ENCODE measurements at regions of chr13 and their contacts with region 1.

Region 1: GRCh38 chr13:59677966-59678814 is 485.5 kb downstream of the DIAPH3 start:
- DNase-seq: peak; percentile 42
- ATAC-seq: peak; percentile 87
- H3K4me3 ChIP-seq: no peak overlapping the region
- H3K27ac ChIP-seq: no peak overlapping the region
- H3K4me1 ChIP-seq: no peaks in the 10 kb centered on the region
- H3K27me3 ChIP-seq: no peaks in the 10 kb centered on the region
- CTCF ChIP-seq: peak; percentile 76
- EP300 ChIP-seq: no peak
- POLR2A ChIP-seq: no peak
- RAD21 ChIP-seq: peak; percentile 49

Region 2: GRCh38 chr13:59391696-59392095 is 286.5 kb before region 1 on chr13:
- CTCF ChIA-PET with region 1: interaction called, 16 read pairs
- POLR2A ChIA-PET with region 1: no interaction called
- in situ Hi-C with region 1: loop called (anchors 5 kb)
- intact Hi-C with region 1: loop called (anchors 1 kb)
- DNase-seq: peak; percentile 39
- ATAC-seq: peak; percentile 87
- H3K4me3 ChIP-seq: no peak overlapping the region
- H3K27ac ChIP-seq: no peak overlapping the region
- H3K4me1 ChIP-seq: no peaks in the 10 kb centered on the region
- H3K27me3 ChIP-seq: no peaks in the 10 kb centered on the region
- CTCF ChIP-seq: peak; percentile 75
- EP300 ChIP-seq: no peak
- POLR2A ChIP-seq: no peak
- RAD21 ChIP-seq: no peak

Region 3: DNA sequence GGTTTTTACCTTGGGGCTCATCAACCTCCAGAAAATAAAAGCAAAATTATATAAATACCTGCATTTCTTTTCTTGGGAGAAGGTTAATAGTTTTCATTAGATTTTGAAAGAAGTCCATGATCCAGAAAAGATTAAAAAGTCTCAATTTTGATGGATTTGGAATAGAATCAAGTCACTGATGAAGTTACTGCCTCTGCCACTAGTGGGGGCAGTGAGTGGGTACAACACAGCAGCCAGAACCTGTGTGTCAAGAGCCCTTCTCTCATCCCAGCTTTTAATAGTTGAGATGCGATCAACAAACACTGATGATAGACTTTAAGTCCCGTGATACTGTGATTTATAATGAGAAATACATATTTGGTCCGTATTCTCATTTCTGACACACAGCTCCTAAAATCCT is 201.2 kb before region 1 on chr13:
- CTCF ChIA-PET with region 1: interaction called, 4 read pairs
- POLR2A ChIA-PET with region 1: no interaction called
- in situ Hi-C with region 1: no loop called
- intact Hi-C with region 1: loop called (anchors 1 kb)
- DNase-seq: peak; percentile 2
- ATAC-seq: peak; percentile 77
- H3K4me3 ChIP-seq: no peak overlapping the region
- H3K27ac ChIP-seq: no peak overlapping the region
- H3K4me1 ChIP-seq: no peaks in the 10 kb centered on the region
- H3K27me3 ChIP-seq: no peaks in the 10 kb centered on the region
- CTCF ChIP-seq: peak; percentile 35
- EP300 ChIP-seq: no peak
- POLR2A ChIP-seq: no peak
- RAD21 ChIP-seq: no peak

Region 4: DNA sequence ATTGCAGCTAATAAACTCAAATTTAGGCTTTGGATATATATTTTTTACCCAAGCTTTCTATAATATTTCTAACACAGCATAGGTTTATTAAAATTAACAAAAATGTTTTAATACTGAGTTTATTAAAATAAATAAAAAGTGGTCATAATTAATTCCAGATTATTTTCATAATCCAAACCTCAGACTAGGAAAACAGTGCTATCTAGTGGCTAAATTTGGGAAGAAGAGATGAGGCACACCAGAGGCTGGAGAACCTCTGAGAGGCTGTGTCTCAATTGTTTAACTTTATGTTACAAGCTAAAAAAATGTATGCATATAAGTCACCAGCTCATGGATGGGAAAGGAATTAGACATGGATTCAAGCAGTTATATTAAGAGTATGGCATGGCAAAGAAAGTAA is 93.1 kb after region 1 on chr13:
- CTCF ChIA-PET with region 1: interaction called, 15 read pairs
- POLR2A ChIA-PET with region 1: no interaction called
- in situ Hi-C with region 1: loop called (anchors 10 kb)
- intact Hi-C with region 1: loop called (anchors 1 kb)
- DNase-seq: peak; percentile 4
- ATAC-seq: no peak
- H3K4me3 ChIP-seq: no peak overlapping the region
- H3K27ac ChIP-seq: no peak overlapping the region
- H3K4me1 ChIP-seq: no peaks in the 10 kb centered on the region; the same call in 1 of the 2 replicates
- H3K27me3 ChIP-seq: no peaks in the 10 kb centered on the region
- CTCF ChIP-seq: peak; percentile 57
- EP300 ChIP-seq: no peak
- POLR2A ChIP-seq: no peak
- RAD21 ChIP-seq: no peak

Region 5: GRCh38 chr13:59906413-59907049 is 228.3 kb after region 1 on chr13:
- CTCF ChIA-PET with region 1: interaction called, 12 read pairs
- POLR2A ChIA-PET with region 1: no interaction called
- in situ Hi-C with region 1: loop called (anchors 10 kb)
- intact Hi-C with region 1: loop called (anchors 1 kb)
- DNase-seq: peak; percentile 1
- ATAC-seq: peak; percentile 47; the same call in 2 of the 3 replicates
- H3K4me3 ChIP-seq: no peak overlapping the region
- H3K27ac ChIP-seq: no peak overlapping the region
- H3K4me1 ChIP-seq: no peaks in the 10 kb centered on the region
- H3K27me3 ChIP-seq: no peaks in the 10 kb centered on the region
- CTCF ChIP-seq: peak; percentile 60
- EP300 ChIP-seq: no peak
- POLR2A ChIP-seq: no peak
- RAD21 ChIP-seq: 0 out of 2 replicates have a peak, but pooled peaks have one; percentile 18

Region 6: DNA sequence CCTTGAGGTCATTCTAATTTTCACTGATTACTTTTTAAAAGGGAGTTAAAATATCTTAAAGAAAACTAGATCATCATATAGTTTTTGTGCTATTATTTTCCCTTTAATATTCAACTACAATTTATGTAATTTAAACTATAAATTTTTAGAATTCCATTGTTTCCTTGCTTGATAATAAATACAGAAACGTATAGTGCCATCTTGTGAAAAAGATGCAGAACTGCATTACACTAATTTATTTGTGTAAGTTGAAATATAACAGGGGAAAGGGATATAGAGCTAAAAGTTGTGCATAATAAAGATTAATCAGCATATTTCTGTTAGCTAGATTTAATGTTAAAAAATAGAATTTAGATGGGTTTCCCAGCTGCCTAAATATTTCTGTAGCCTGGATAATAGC is 657.3 kb after region 1 on chr13:
- CTCF ChIA-PET with region 1: interaction called, 4 read pairs
- POLR2A ChIA-PET with region 1: no interaction called
- in situ Hi-C with region 1: no loop called
- intact Hi-C with region 1: loop called (anchors 1 kb)
- DNase-seq: peak; percentile 3
- ATAC-seq: no peak
- H3K4me3 ChIP-seq: no peak overlapping the region
- H3K27ac ChIP-seq: no peak overlapping the region
- H3K4me1 ChIP-seq: no peaks in the 10 kb centered on the region
- H3K27me3 ChIP-seq: 0 out of 5 replicates have a peak, but pooled peaks cover 0 to 3% of the 10 kb centered on the region in 2 experiments
- CTCF ChIP-seq: peak; percentile 33
- EP300 ChIP-seq: no peak
- POLR2A ChIP-seq: no peak
- RAD21 ChIP-seq: no peak

Region 7: DNA sequence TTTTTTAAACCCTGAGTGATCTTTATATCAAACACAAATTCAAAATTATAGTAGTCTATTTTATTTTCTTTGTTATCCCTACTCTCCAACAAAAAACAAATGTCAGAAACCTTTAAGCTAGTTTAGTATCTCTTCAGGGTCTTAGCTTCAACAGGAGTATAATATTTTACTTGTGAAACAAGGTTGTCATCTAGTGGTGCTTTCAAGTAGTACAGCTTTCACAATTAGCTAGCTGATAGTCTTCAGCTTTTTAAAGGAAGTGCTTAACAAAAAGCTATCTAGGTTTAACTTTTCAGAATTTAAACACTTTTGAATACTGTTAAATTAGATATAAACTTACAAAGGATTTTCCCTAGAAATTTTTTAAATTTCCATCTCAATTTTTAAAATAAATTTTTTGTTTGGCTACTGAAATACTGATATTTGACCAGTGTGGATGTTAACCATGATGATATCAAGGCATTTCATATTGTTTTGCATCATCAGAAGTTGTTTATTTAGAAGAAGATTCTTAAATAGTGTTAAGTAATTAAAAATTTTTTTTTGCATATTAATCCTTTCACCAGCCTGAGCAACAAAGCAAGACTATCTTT is 753.0 kb after region 1 on chr13:
- CTCF ChIA-PET with region 1: interaction called, 5 read pairs
- POLR2A ChIA-PET with region 1: no interaction called
- in situ Hi-C with region 1: no loop called
- intact Hi-C with region 1: loop called (anchors 5 kb)
- DNase-seq: peak; percentile 47
- ATAC-seq: peak; percentile 80
- H3K4me3 ChIP-seq: no peak overlapping the region
- H3K27ac ChIP-seq: no peak overlapping the region
- H3K4me1 ChIP-seq: no peaks in the 10 kb centered on the region
- H3K27me3 ChIP-seq: no peaks in the 10 kb centered on the region
- CTCF ChIP-seq: peak; percentile 72
- EP300 ChIP-seq: no peak
- POLR2A ChIP-seq: no peak
- RAD21 ChIP-seq: peak; percentile 58; the same call in 1 of the 2 replicates

Measured in HepG2 (cell line).